Psoas muscle (tissue), 8 donors: ENCODE measurements at regions of chr19 and their contacts with region 1.

Region 1: GRCh38 chr19:50511068-50511822 is at the start of gene JOSD2:
- DNase-seq: peak; percentile 99
- ATAC-seq: peak; percentile 90 to 96 (median 94)
- H3K4me3 ChIP-seq: peak within 1 kb of the TSS; percentile 88
- H3K27ac ChIP-seq: peak within 1 kb of the TSS; percentile 80
- H3K4me1 ChIP-seq: peaks cover 7% of the 10 kb centered on the region
- H3K27me3 ChIP-seq: peaks cover 0 to 9% (median 0%) of the 10 kb centered on the region in 3 donors
- CTCF ChIP-seq: no peak
- total RNA-seq, gene JOSD2: 28.5 to 41.0 (median 37.4) TPM

Region 2: DNA sequence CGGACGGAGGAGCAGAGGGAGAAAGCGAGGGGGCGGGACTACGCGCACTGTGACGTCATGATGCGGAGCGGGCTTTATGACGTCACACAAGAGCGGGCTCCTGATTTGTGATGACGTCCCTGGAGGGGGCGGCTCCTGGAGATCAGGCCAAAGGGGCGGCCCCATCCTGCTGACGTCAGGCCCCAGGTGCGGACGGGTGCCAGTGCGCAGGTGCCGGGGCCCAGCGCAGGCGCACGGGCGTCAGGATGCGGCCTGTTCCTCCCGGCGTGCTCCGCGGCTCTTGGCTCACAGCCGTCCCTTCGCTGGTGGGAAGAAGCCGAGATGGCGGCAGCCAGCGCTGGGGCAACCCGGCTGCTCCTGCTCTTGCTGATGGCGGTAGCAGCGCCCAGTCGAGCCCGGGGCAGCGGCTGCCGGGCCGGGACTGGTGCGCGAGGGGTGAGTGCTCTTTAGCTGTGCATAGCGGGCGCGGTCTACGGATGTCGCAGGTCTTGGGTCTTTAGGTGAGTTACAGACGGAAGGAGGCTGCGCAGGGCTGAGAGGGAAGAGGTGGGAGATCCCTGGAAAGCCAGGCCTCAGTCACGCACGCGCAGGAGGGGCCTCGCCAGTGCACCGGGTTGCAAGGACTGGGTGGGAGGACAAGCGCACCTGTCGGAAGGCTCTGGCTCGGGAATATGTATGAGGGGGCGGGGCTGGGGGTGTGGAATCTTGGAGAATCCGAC is 34.9 kb before region 1 on chr19 and contains the starts of genes EMC10 and GARIN5A:
- intact Hi-C with region 1: loop called in 1 of 2 experiments (anchors 5 kb)
- DNase-seq: peak; percentile 90 to 95
- ATAC-seq: peak; percentile 92 to 97 (median 94)
- H3K4me3 ChIP-seq: peak within 1 kb of the TSS; percentile 97
- H3K27ac ChIP-seq: peak within 1 kb of the TSS; percentile 84
- H3K4me1 ChIP-seq: peaks cover 17% of the 10 kb centered on the region
- H3K27me3 ChIP-seq: no peaks in the 10 kb centered on the region
- CTCF ChIP-seq: no peak
- total RNA-seq, gene EMC10: 32.6 to 47.5 (median 43.3) TPM
- total RNA-seq, gene GARIN5A: 1.2 to 5.3 (median 4.7) TPM

Region 3: DNA sequence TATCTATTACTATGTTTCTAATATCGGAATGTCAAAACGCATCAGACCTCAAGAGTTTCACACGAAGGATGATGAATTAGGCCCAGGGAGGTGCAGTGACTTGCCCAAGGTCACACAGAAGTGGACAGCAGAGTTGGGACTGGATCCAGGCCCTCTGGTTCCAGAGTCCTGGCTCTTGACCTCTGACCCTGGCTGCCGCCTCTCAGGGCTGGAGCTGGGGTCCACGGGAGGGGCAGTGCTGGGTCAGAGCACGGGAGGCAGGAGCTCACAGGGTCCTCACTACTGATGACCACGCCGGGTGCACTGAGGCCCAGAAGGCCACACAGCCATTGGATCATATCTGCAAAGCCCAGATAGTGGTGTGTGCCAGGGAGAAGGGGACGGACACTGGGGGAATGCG is 11.6 kb after region 1 on chr19:
- intact Hi-C with region 1: no loop called
- DNase-seq: no peak
- ATAC-seq: no peak
- H3K4me3 ChIP-seq: no peak overlapping the region
- H3K27ac ChIP-seq: no peak overlapping the region
- H3K4me1 ChIP-seq: no peaks in the 10 kb centered on the region
- H3K27me3 ChIP-seq: peaks cover 0 to 3% (median 0%) of the 10 kb centered on the region in 3 donors
- CTCF ChIP-seq: no peak

Region 4: DNA sequence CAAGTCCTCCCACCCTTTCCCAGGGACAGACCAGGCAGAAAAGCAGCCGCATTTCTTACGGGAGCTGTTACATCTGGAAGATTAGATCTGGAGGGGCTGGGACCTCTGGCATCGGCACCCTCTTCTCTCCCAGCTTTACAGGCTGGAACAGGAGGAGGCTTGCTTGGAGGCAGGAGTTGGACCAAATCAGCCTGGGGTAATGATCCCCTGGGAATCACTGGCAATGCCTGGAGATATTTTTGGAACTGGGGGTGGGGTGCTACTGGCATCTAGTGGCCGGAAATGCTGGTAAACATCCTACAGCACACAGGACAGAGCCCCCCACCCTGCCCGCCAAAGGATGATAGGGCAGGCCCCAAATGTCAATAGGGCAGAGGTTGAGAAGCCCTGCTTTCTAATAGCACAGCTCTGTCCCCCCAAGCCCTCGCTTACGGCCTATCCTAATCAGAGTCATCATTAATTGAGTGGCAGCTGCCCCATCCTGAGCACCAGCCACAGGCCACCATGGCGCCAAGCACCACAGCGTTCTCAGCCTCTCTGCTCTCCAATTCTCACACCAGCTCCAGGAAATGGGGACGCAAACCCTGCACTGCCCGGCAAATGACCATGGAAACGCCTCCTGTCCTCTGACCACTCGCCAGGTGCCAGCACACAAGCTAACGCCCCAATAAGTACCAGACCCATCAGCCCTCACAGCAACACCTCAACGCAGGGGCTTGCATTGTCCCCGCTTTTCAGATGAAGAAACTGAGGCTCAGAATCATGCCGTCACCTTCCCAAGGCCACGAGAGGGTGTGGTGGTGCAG is 36.3 kb after region 1 on chr19:
- intact Hi-C with region 1: no loop called
- DNase-seq: no peak
- ATAC-seq: peak in 1 of 4 donors; percentile 38
- H3K4me3 ChIP-seq: no peak overlapping the region
- H3K27ac ChIP-seq: no peak overlapping the region
- H3K4me1 ChIP-seq: no peaks in the 10 kb centered on the region
- H3K27me3 ChIP-seq: peaks cover 0 to 21% (median 12%) of the 10 kb centered on the region in 3 donors
- CTCF ChIP-seq: peak; percentile 14